Activated CD4-positive, alpha-beta memory T cell treated with anti-CD3 and anti-CD28 coated beads for 36 hours (primary cell): ENCODE measurements at regions of chr14 and their contacts with region 1.

Region 1: GRCh38 chr14:21917699-21918436 is 244.2 kb upstream of the OR4E1 start:
- DNase-seq: peak; percentile 61
- H3K4me3 Mint-ChIP-seq: peak overlapping the region; percentile 73
- H3K27ac Mint-ChIP-seq: peak overlapping the region; percentile 73
- H3K4me1 Mint-ChIP-seq: peaks cover 58% of the 10 kb centered on the region
- H3K27me3 Mint-ChIP-seq: no peaks in the 10 kb centered on the region

Region 2: DNA sequence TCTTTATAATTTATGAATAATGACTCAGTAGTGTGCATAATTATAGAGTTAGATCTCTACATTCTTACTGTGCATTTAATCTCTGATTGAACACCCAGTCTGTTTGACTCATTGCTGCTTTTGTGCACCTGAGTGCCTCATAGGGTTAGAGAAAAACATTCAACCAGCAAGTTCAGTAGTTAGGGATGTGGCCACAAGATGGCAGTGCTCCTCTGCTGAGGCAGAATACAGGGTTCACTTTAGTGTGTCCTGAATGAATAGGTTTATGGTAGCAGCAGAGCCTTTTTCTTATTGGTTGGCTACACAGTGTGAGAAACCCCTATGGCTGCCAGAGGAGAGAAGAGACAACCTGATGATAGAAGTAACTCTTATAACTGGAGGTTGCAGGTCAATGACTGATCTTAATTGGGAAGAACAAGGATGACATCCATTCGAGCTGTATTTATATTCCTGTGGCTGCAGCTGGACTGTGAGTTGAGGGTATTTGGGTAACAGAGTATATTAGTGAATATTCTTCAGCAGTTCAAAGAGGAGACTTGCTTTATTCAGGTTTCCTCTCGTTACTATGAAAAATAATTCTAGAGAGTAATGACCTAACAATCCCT is 49.3 kb before region 1 on chr14:
- CTCF ChIA-PET with region 1: interaction called, 12 read pairs
- POLR2A ChIA-PET with region 1: no interaction called
- intact Hi-C with region 1: loop called (anchors 1 kb)
- DNase-seq: peak; percentile 89
- H3K4me3 Mint-ChIP-seq: peak overlapping the region; percentile 68
- H3K27ac Mint-ChIP-seq: peak overlapping the region; percentile 82
- H3K4me1 Mint-ChIP-seq: peaks cover 41% of the 10 kb centered on the region
- H3K27me3 Mint-ChIP-seq: no peaks in the 10 kb centered on the region

Region 3: DNA sequence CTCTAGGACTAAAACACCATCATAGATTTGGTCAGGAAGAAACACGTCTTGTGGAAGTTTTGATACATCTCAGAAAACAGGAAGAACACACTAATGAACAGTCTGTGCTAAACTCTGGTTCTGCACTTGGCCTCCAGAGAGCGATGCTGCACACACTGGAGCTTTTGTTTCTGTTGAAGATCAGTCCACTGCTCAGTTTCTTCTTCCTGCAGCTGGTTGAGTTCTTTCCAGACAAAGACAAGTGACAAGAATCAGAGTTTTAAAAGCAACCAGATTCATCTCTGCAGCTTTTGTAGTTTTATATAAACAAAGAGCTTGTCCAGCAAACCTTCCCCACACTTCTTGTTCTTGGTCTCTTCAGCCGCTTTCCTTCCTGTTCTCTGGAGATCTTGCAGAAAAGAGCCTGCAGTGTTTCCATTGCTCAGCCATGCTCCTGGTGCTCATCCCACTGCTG is 15.2 kb before region 1 on chr14:
- CTCF ChIA-PET with region 1: interaction called, 18 read pairs
- POLR2A ChIA-PET with region 1: no interaction called
- intact Hi-C with region 1: no loop called
- DNase-seq: peak; percentile 61
- H3K4me3 Mint-ChIP-seq: peak overlapping the region; percentile 71
- H3K27ac Mint-ChIP-seq: peak overlapping the region; percentile 67
- H3K4me1 Mint-ChIP-seq: peaks cover 14% of the 10 kb centered on the region
- H3K27me3 Mint-ChIP-seq: no peaks in the 10 kb centered on the region

Region 4: GRCh38 chr14:21978184-21978998 is 60.5 kb after region 1 on chr14:
- CTCF ChIA-PET with region 1: interaction called, 71 read pairs
- POLR2A ChIA-PET with region 1: interaction called, 3 read pairs
- intact Hi-C with region 1: loop called (anchors 5 kb)
- DNase-seq: peak; percentile 74
- H3K4me3 Mint-ChIP-seq: peak overlapping the region; percentile 72
- H3K27ac Mint-ChIP-seq: peak overlapping the region; percentile 77
- H3K4me1 Mint-ChIP-seq: peaks cover 12% of the 10 kb centered on the region
- H3K27me3 Mint-ChIP-seq: peaks cover 3% of the 10 kb centered on the region